GM12878 (cell line): ENCODE measurements at regions of chr14 and their contacts with region 1.

Region 1: GRCh38 chr14:105369653-105370040 is 28.7 kb upstream of the TEX22 start:
- DNase-seq: no peak
- ATAC-seq: no peak
- H3K4me3 ChIP-seq: no peak overlapping the region
- H3K27ac ChIP-seq: no peak overlapping the region
- H3K4me1 ChIP-seq: no peaks in the 10 kb centered on the region
- H3K27me3 ChIP-seq: no peaks in the 10 kb centered on the region
- CTCF ChIP-seq: no peak
- EP300 ChIP-seq: no peak
- POLR2A ChIP-seq: no peak
- RAD21 ChIP-seq: no peak

Region 2: DNA sequence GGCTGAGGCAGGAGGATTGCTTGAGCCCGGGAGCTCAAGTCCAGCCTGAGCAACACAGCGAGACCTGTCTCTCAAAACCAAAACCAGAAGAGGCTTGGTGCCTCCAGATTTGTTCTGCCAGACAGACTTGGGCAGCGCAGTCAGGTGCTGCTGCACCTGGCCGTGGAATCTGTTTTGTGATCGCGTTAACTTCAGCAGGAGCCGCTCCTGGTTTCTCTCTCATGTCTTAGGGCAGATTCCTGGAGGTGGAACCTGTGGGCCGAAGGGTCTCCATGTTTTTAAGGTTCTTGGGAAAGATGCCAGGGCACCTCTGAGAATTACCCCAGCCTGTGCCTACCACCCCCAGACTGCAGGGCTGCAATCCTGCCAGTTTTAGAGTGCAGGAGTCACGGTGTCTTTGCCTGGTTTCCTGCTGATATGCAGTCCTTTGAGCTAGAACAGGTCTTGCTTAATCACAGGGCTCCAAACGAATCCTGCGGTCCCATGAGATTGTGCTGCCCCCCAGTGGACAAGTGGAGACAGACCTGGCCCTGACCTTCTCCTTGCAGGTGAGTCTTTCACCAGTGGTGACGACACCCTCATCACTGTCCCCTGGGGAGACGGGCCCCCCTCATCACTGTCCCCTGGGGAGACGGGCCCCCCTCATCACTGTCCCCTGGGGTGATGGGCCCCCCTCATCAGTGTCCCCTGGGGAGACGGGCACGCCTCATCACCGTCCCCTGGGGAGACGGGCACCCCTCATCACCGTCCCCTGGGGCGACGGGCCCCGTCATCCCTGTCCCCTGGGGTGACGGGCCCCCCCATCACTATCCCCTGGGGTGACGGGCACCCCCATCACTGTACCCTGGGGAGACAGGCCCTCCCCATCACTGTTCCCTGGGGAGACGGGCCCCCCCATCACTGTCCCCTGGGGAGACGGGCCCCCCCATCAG is 17.5 kb before region 1 on chr14:
- CTCF ChIA-PET with region 1: no interaction called
- POLR2A ChIA-PET with region 1: no interaction called
- RAD21 ChIA-PET with region 1: no interaction called
- SMC1A ChIA-PET with region 1: no interaction called
- in situ Hi-C with region 1: no loop called
- intact Hi-C with region 1: no loop called
- DNase-seq: peak; percentile 54
- ATAC-seq: peak; percentile 100
- H3K4me3 ChIP-seq: no peak overlapping the region
- H3K27ac ChIP-seq: no peak overlapping the region
- H3K4me1 ChIP-seq: no peaks in the 10 kb centered on the region; the same call in 1 of the 2 replicates
- H3K27me3 ChIP-seq: no peaks in the 10 kb centered on the region
- CTCF ChIP-seq: peak; percentile 87 to 91 (median 88)
- EP300 ChIP-seq: no peak
- POLR2A ChIP-seq: no peak
- RAD21 ChIP-seq: peak; percentile 96

Region 3: GRCh38 chr14:105480952-105481801 is 111.5 kb after region 1 on chr14:
- CTCF ChIA-PET with region 1: interaction called, 11 read pairs
- POLR2A ChIA-PET with region 1: no interaction called
- RAD21 ChIA-PET with region 1: interaction called, 12 read pairs
- SMC1A ChIA-PET with region 1: interaction called, 6 read pairs
- in situ Hi-C with region 1: loop called (anchors 5 kb)
- intact Hi-C with region 1: no loop called
- DNase-seq: no peak
- ATAC-seq: peak; percentile 83
- H3K4me3 ChIP-seq: peak overlapping the region; percentile 25; the same call in 1 of the 2 replicates
- H3K27ac ChIP-seq: no peak overlapping the region; the same call in 1 of the 2 replicates
- H3K4me1 ChIP-seq: peaks cover 24% of the 10 kb centered on the region
- H3K27me3 ChIP-seq: peaks cover under 1 to 2% of the 10 kb centered on the region in 2 experiments; a peak in 3 of 4 replicates
- CTCF ChIP-seq: peak; percentile 95 to 99 (median 99); a peak in 5 of 6 replicates
- EP300 ChIP-seq: no peak
- POLR2A ChIP-seq: no peak
- RAD21 ChIP-seq: peak; percentile 72